PC-9 (cell line): ENCODE measurements at regions of chr19 and their contacts with region 1.

Region 1: DNA sequence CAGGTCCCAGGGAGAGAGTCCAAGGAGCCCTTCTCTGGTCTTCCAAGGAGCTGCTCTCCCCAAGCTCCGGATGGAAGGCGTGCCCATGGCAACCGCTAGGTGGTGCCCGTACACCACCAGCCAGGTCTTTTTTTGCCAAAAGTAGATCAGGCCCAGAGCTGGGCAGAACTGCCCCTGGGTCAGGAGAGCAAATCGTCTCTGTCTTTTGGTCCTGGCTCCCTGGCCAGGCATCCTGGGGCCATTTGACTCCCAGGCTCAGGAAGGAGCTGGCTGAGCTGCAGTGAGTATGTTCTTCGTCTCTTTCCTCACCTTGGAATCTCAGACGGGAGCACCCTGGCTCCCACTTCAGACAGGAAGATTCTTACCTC is 24.6 kb upstream of the BCL3 start:
- DNase-seq: peak; percentile 74 to 88
- H3K4me3 ChIP-seq: no peak overlapping the region
- H3K27ac ChIP-seq: peak overlapping the region; percentile 62
- H3K4me1 ChIP-seq: peaks cover 66% of the 10 kb centered on the region
- H3K27me3 ChIP-seq: no peaks in the 10 kb centered on the region
- CTCF ChIP-seq: peak; percentile 98

Region 2: DNA sequence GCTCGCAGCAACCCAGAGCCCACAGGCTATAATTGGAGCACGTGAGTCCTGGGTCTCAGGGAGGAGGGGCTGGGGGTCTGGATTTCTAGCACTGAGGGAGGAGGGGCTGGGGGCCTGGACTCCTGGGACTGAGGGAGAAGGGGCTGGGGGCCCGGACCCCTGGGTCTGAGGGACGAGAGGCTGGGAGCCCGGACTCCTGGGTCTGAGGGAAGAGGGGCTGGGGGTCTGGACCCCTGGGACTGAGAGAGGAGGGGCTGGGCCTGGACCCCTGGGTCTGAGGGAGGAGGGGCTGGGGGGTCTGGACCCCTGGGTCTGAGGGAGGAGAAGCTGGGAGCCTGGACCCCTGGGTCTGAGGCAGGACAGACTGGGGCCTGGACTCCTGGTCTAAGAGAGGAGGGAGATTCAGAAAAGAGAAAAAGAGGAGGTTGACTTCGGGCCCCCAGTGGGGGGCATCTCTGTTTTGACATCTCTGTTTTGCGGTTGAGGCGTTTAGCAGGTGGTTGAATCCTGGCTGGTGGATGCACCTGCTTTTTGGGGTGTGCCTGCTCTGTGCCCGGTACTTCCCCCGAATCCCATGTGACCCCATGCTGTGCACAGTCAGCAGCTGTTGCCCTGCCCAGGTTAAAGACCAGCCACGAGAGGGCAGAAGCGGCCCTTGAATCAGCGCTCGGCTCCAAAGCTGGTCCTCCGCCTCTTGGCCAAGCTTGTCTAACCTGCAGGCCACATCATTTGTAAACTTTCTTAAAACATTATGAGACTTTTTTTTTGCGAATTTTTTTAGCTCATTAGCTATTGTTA is 69.8 kb before region 1 on chr19:
- CTCF ChIA-PET with region 1: interaction called, 4 read pairs
- POLR2A ChIA-PET with region 1: no interaction called
- intact Hi-C with region 1: loop called (anchors 1 kb)
- DNase-seq: peak; percentile 76 to 84
- H3K4me3 ChIP-seq: no peak overlapping the region
- H3K27ac ChIP-seq: peak overlapping the region; percentile 33
- H3K4me1 ChIP-seq: peaks cover 8% of the 10 kb centered on the region; the same call in 1 of the 2 replicates
- H3K27me3 ChIP-seq: no peaks in the 10 kb centered on the region
- CTCF ChIP-seq: peak; percentile 77

Region 3: GRCh38 chr19:44741841-44742352 is 18.0 kb after region 1 on chr19:
- CTCF ChIA-PET with region 1: interaction called, 13 read pairs
- POLR2A ChIA-PET with region 1: no interaction called
- intact Hi-C with region 1: loop called (anchors 2 kb)
- DNase-seq: peak; percentile 97 to 99
- H3K4me3 ChIP-seq: peak overlapping the region; percentile 44; the same call in 1 of the 2 replicates
- H3K27ac ChIP-seq: peak overlapping the region; percentile 99
- H3K4me1 ChIP-seq: peaks cover 80% of the 10 kb centered on the region
- H3K27me3 ChIP-seq: no peaks in the 10 kb centered on the region
- CTCF ChIP-seq: no peak

Region 4: DNA sequence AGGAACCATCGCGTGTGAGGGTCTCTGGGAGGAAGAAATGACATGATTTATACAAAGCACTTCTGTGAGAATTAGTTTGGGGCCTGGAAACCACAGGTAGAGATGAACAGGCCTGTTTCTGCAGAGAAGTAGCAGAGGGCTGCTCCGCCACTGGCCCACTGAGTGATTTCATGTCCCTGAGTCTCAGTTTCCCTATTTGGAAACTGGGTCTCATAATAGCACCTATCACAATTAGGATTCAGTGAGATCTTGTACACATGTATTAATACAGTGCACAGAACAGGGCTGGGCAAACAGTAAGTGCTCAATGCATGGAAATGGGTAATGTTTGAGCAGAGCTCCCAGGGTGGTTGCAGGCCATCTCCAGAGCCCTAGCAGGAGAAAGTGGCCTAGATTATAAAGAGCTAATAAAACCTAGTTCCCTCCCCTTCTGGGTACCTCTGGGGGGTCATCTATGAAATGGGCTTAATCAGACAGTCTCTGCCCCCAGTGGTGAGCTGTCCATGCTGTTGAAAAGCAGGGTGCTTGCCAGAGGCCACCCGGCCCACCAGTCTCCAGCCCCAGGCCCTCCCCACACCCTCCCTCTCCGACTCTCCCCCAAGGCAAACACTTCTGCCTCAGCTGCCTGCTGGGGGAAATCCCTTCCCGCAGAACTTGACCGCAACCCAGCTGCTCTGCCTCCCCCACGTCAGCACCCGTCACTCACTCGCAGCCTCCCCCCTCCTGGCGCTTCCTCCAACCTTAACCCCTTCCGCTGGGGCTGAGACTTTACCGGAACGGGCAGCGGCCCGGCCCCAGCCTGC is 29.1 kb after region 1 on chr19:
- CTCF ChIA-PET with region 1: interaction called, 11 read pairs
- POLR2A ChIA-PET with region 1: interaction called, 6 read pairs
- intact Hi-C with region 1: loop called (anchors 1 kb)
- DNase-seq: peak; percentile 84 to 91
- H3K4me3 ChIP-seq: peak overlapping the region; percentile 42; the same call in 1 of the 2 replicates
- H3K27ac ChIP-seq: peak overlapping the region; percentile 16
- H3K4me1 ChIP-seq: peaks cover 50% of the 10 kb centered on the region
- H3K27me3 ChIP-seq: no peaks in the 10 kb centered on the region
- CTCF ChIP-seq: no peak

Region 5: DNA sequence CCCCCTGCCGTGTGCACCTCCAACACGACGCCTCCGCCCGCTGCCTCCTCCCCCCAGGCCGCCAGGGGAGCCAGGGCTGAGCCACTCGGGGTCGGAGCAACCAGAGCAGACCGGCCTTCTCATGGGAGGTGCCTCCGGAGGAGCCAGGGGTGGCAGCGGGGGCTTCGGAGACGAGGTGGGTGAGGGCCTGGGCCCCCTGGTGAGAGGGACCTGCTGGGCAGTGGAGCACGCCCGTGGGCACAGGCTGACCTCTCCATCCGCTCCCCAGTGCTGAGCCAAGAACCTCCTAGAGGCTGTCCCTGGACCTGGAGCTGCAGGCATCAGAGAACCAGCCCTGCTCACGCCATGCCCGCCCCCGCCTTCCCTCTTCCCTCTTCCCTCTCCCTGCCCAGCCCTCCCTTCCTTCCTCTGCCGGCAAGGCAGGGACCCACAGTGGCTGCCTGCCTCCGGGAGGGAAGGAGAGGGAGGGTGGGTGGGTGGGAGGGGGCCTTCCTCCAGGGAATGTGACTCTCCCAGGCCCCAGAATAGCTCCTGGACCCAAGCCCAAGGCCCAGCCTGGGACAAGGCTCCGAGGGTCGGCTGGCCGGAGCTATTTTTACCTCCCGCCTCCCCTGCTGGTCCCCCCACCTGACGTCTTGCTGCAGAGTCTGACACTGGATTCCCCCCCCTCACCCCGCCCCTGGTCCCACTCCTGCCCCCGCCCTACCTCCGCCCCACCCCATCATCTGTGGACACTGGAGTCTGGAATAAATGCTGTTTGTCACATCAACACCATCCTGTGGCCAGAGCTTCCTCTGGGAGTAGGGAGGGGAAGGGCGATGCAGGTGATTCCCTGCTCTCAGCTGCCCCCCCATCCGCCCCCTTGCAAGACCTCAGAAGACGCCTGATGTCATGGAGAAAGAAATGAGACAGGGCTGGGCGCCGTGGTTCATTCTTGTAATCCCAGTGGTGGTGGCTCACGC is 97.0 kb after region 1 on chr19:
- CTCF ChIA-PET with region 1: no interaction called
- POLR2A ChIA-PET with region 1: no interaction called
- intact Hi-C with region 1: no loop called
- DNase-seq: no peak
- H3K4me3 ChIP-seq: no peak overlapping the region
- H3K27ac ChIP-seq: no peak overlapping the region
- H3K4me1 ChIP-seq: no peaks in the 10 kb centered on the region
- H3K27me3 ChIP-seq: no peaks in the 10 kb centered on the region
- CTCF ChIP-seq: no peak

Region 6: DNA sequence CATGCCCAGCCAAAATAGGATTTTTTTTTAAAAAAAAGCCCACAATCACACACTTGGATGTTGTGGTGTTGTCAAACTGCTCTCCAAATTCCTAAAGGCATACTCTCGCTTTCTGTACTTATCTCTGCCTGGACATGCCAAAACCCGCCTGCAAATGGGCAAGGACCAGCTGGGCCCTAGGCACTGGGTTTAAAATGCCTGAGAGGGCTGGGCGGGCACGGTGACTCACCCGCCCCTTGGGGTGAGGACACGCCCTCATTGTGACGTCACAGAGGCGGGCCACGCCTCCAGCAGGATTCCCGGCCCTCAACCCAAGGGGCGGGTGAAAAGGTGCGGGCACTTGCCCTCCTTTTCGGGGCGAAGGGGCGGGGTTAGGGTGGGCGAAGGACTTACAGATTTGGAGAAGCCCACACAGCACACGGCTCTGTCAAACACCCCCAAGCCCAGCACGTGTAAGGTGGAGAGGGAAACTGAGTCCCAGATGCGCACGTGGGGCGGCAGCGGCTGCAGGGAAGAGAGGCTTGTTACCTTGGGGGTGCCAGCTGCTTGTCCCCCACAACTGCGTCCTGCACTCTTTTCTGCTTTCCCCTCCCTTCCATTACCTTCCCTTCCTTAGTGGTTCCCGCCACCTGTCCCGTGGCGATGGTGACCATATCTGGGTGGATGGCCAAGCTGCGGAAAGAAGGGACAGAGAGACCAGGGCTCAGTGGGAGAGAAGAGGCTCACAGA is 908.7 kb after region 1 on chr19:
- CTCF ChIA-PET with region 1: interaction called, 14 read pairs
- POLR2A ChIA-PET with region 1: no interaction called
- intact Hi-C with region 1: no loop called
- DNase-seq: peak; percentile 90 to 94
- H3K4me3 ChIP-seq: no peak overlapping the region
- H3K27ac ChIP-seq: peak overlapping the region; percentile 54
- H3K4me1 ChIP-seq: peaks cover 34% of the 10 kb centered on the region
- H3K27me3 ChIP-seq: no peaks in the 10 kb centered on the region
- CTCF ChIP-seq: no peak